ENCODE measurements at regions of chr5 and their contacts with region 1.

Region 1: GRCh38 chr5:61933787-61934626 is 372.0 kb upstream of the KIF2A start:
- ATAC-seq: peak in 6 of 8 experiments; percentile 55 to 90 (median 78)
- H3K4me3 ChIP-seq: no peak overlapping the region
- H3K27ac ChIP-seq: no peak overlapping the region
- H3K4me1 ChIP-seq: no peaks in the 10 kb centered on the region

Region 2: GRCh38 chr5:60699530-60700382 is 1234.3 kb before region 1 on chr5 and contains the start of gene DEPDC1B:
- in situ Hi-C with region 1: loop called in 1 of 9 experiments (anchors 25 kb)
- ATAC-seq: peak; percentile 95 to 97 (median 96)
- H3K4me3 ChIP-seq: peak within 1 kb of the TSS; percentile 58 to 97 (median 78)
- H3K27ac ChIP-seq: peak within 1 kb of the TSS; percentile 38 to 70
- H3K4me1 ChIP-seq: peaks cover 9 to 11% of the 10 kb centered on the region in 2 donors
- total RNA-seq, gene DEPDC1B: 0.71 to 24.9 (median 2.8) TPM

Region 3: GRCh38 chr5:60960591-60960990 is 973.4 kb before region 1 on chr5:
- in situ Hi-C with region 1: loop called in 1 of 9 experiments (anchors 25 kb)
- ATAC-seq: no peak
- H3K4me3 ChIP-seq: no peak overlapping the region
- H3K27ac ChIP-seq: no peak overlapping the region
- H3K4me1 ChIP-seq: no peaks in the 10 kb centered on the region

Region 4: GRCh38 chr5:60993425-60993824 is 940.6 kb before region 1 on chr5:
- in situ Hi-C with region 1: loop called in 1 of 9 experiments (anchors 25 kb)
- ATAC-seq: peak in 1 of 8 experiments; percentile 45
- H3K4me3 ChIP-seq: no peak overlapping the region
- H3K27ac ChIP-seq: no peak overlapping the region
- H3K4me1 ChIP-seq: no peaks in the 10 kb centered on the region

Region 5: DNA sequence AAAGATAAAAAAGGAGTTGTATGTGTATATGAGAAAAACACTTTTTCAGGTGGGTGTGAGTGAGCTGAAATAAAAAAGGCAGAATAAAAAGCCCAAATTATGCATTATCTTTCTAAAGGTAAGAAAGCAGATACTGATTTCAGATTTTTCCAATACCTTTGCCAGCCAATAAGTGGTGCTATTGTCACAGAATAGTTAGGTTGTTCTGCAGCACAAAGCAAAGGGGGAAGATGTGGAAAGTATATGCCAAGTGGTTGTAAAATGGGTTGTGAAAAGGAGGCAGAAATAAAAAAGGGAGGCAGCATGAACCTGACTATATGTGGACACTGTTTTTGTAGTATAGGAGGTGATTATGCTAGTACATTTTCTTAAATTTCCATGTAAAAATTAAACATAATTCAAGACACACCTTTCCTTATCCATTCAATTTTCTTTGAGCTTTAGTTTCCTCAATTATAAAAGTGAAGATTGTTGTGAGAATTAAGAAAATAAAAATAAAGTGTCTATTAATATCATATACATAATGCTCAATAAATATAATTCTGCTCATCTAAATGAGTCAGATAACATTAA is 878.5 kb before region 1 on chr5:
- in situ Hi-C with region 1: loop called in 1 of 9 experiments (anchors 25 kb)
- ATAC-seq: peak in 5 of 8 experiments; percentile 14 to 67 (median 35)
- H3K4me3 ChIP-seq: no peak overlapping the region
- H3K27ac ChIP-seq: no peak overlapping the region
- H3K4me1 ChIP-seq: peaks cover 0 to 10% of the 10 kb centered on the region in 2 donors

Region 6: DNA sequence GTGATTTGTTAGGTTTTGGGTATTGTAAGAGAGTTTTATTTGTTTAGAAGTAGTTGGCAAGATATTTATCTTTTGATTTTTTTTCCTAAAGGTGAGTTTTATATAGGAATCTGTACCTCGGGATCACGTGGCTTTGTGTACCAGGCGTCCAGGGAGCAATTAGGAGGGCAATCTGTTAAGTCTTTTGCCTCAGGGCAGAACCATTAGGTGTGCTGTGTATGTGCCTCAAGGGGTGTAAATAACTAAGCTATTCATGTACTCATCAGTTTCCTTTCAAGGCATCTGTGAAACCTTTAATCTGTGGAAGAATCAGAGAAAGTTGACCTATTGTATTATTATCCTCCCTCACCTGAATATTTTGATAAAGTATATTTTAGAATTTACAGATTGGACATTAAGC is 562.5 kb before region 1 on chr5:
- in situ Hi-C with region 1: no loop called
- ATAC-seq: no peak
- H3K4me3 ChIP-seq: no peak overlapping the region
- H3K27ac ChIP-seq: no peak overlapping the region
- H3K4me1 ChIP-seq: peaks cover 0 to 12% of the 10 kb centered on the region in 2 donors

Measured in motor neuron (in vitro differentiated cells).